ENCODE measurements at regions of chr2 and their contacts with region 1.

Region 1: GRCh38 chr2:64453770-64454385 is at the start of gene LGALSL:
- DNase-seq: peak; percentile 83
- ATAC-seq: peak; percentile 90
- total RNA-seq, gene LGALSL: 4.2 TPM

Region 2: GRCh38 chr2:64404002-64404731 is 49.7 kb before region 1 on chr2:
- intact Hi-C with region 1: loop called (anchors 5 kb)
- DNase-seq: peak; percentile 92
- ATAC-seq: peak; percentile 87

Measured in Right ventricle myocardium superior (tissue), 1 donor.